Dorsolateral prefrontal cortex (tissue), 120 donors: ENCODE measurements at regions of chr17 and their contacts with region 1.

Region 1: GRCh38 chr17:17694169-17695081 is 13.2 kb downstream of the RAI1 start:
- DNase-seq: peak; percentile 60 to 88 (median 74)
- H3K4me3 ChIP-seq: peak overlapping the region; percentile 54 to 98 (median 81)
- H3K27ac ChIP-seq: peak overlapping the region; percentile 89 to 99 (median 98)
- H3K27me3 ChIP-seq: no peaks in the 10 kb centered on the region
- CTCF ChIP-seq: peak in 31 of 56 donors; percentile 4 to 50 (median 22)

Region 2: DNA sequence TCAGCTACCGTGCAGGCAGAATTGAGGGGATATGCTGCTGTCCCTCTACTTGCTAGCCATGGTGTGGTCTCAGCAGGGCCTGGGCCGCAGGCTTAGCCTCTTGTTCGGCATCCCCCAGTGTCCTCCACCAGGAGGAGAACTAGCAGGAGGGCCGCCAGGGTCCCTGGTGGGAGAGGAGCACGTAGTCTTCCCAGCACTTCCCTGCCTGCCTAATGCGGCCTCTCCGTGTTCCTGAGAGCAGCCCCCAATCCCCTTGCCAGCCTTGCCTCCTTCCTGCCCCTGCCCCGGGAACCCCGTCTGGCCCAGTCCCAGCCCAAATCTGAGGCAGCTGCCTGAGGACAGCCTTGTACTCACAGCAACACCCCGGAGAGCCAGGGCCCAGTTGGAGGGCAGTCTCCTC is 526.4 kb before region 1 on chr17:
- intact Hi-C with region 1: no loop called
- DNase-seq: no peak
- H3K4me3 ChIP-seq: no peak overlapping the region
- H3K27ac ChIP-seq: peak overlapping the region in 1 of 59 donors; percentile 5
- H3K27me3 ChIP-seq: no peaks in the 10 kb centered on the region
- CTCF ChIP-seq: no peak

Region 3: GRCh38 chr17:17511881-17512858 is 182.3 kb before region 1 on chr17:
- intact Hi-C with region 1: no loop called
- DNase-seq: peak in 2 of 10 donors; percentile 13 to 49
- H3K4me3 ChIP-seq: no peak overlapping the region
- H3K27ac ChIP-seq: peak overlapping the region in 3 of 59 donors; percentile 9 to 11 (median 11)
- H3K27me3 ChIP-seq: no peaks in the 10 kb centered on the region
- CTCF ChIP-seq: no peak

Region 4: DNA sequence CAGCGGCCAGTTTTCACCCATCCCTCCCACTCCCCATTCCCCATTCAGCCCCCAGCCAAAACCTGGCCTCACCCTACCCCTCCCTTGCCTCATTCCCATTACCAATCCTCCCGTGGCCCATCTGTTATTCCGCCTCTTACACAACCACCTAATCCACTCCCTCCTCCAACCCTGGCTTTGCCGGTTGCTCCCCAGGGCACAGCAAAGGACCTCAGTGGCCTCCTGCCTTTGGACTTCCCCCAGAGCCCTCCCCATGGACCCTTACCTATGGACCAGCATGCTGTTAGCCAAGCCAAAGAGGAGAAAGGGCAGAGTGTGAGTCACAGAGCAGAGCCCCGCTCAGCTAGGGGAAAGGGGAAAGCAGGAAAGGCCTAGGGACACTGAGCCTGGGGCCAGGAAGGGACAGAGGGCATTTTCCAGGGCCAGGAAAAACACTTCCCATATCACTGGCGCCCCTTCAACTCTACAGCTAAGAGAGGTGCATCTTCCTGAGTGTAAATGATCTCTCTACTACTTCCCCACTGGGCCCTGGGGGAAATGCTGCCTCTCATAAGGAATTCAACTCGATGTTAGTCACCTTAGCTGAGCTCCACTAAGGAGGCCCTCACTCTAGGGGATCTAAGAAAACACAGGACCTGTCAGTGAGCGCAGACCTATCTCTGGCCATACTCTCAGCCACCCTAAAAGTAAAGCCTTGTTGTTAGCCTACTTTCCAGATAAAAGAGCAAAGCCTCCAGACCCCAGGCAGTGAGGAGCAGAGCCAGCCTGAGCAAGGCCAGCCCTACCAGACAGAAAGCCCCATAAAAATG is 113.6 kb before region 1 on chr17:
- intact Hi-C with region 1: no loop called
- DNase-seq: no peak
- H3K4me3 ChIP-seq: no peak overlapping the region
- H3K27ac ChIP-seq: peak overlapping the region in 1 of 59 donors; percentile 25
- H3K27me3 ChIP-seq: no peaks in the 10 kb centered on the region
- CTCF ChIP-seq: no peak

Region 5: DNA sequence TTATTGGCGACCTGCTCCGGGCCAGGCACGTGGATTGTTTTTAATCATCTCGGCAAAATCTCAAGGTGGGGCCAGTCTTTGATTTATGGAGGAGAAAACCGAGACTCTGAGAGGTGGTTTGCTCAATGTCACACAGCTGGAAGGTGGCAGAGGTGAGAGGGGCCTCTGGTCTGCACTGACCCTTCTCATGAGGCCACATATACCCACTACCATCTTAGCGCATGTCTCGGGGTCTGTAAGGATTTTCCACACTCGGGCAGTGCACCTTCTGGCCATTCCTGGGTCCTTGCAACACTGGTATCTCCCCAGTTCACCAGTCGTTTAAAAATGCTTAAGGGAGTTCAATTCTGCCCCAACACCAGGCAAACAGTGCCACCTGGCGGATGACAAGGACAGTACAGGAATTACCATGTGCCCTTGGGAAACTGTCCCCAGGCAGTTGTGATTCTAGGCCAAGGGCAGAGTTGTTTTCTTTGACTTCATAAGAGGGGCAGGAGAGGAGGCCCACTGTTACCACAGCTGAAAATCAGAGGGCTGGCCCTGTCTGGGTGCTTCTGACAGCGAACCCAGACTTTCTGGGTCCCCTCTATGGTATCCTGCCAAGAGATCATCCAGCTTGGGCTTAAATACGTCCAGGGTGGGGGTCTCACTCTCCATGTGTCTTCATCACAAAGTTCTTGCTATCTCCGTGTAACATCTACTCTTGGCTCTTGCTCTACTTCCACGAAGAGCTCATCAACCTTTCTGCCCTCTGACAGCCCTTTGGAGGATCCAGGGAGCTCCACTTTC is 52.6 kb before region 1 on chr17:
- intact Hi-C with region 1: no loop called
- DNase-seq: peak; percentile 64 to 88 (median 78)
- H3K4me3 ChIP-seq: no peak overlapping the region
- H3K27ac ChIP-seq: peak overlapping the region in 1 of 59 donors; percentile 22
- H3K27me3 ChIP-seq: no peaks in the 10 kb centered on the region
- CTCF ChIP-seq: peak; percentile 68 to 96 (median 91)

Region 6: DNA sequence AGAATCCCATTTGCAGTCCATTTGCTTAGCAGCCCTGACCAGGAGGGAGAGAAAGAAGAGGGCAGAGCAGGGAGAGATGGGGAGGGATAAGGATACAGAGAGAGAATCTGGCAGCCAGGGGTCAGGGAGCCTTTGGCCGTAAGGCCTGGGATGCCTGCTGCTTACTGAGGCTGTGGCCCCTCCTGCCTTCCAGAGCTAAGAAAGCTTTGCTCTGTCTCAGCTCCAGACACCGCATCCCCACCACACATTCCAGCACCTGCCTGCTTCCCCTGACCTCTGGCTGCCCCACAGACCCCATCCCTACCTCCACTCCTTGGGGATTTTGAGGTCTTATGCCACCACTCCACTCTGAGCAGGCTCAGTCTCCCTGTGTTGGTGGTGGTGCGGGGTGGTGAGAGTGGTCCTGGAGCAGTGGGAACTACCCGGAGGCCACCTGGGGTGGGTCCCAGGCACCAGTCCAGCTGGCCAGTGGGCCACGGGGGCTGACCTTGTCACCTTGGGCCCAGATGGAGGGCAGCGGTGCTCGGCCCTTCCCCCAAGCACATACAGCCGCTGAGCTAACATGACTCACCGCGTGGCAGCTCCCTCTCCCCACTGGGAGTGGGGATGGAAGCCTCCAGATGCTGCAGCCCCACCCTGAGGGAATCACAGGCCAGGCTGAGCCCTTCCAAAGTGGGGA is 45.1 kb after region 1 on chr17:
- intact Hi-C with region 1: loop called in 1 of 2 experiments (anchors 5 kb)
- DNase-seq: peak in 9 of 10 donors; percentile 52 to 90 (median 78)
- H3K4me3 ChIP-seq: peak overlapping the region in 53 of 59 donors; percentile 2 to 73 (median 52)
- H3K27ac ChIP-seq: peak overlapping the region; percentile 85 to 100 (median 98)
- H3K27me3 ChIP-seq: no peaks in the 10 kb centered on the region
- CTCF ChIP-seq: peak in 5 of 56 donors; percentile 9 to 34 (median 22)

Region 7: GRCh38 chr17:17752089-17752820 is 57.8 kb after region 1 on chr17:
- intact Hi-C with region 1: loop called in 1 of 2 experiments (anchors 5 kb)
- DNase-seq: peak; percentile 83 to 94 (median 92)
- H3K4me3 ChIP-seq: peak overlapping the region; percentile 4 to 70 (median 54)
- H3K27ac ChIP-seq: peak overlapping the region; percentile 28 to 100 (median 89)
- H3K27me3 ChIP-seq: no peaks in the 10 kb centered on the region
- CTCF ChIP-seq: peak in 51 of 56 donors; percentile 6 to 69 (median 46)